ENCODE measurements at regions of chrX and their contacts with region 1.

Region 1: DNA sequence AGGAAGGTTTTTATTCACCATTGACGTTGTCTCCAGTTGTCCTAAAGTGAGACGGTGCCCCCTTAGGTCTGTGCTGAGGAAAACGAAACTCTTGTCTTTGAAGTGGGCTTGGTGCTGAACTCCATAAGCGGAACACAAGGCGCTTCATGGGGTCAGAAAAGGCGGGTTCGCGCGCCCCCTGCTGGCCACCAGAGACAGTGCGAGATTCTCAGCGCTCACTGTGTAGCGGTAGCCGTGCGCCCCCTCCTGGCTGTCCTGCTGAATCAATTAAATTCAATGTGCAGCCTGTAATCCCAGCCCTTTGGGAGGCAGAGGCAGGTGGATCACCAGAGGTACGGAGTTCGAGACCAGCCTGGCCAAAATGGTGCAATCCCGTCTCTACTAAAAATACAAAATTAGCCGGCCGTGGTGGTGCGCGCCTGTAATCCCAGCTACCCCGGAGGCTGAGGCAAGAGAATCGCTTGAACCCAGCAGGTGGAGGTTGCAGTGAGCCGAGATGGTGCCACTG is 64.1 kb downstream of the RLIM start:
- DNase-seq: peak; percentile 90
- ATAC-seq: peak; percentile 85
- H3K4me3 Mint-ChIP-seq: no peak overlapping the region
- H3K27ac Mint-ChIP-seq: peak overlapping the region; percentile 62
- H3K4me1 Mint-ChIP-seq: peaks cover 2% of the 10 kb centered on the region
- H3K27me3 Mint-ChIP-seq: peaks cover 2% of the 10 kb centered on the region

Region 2: DNA sequence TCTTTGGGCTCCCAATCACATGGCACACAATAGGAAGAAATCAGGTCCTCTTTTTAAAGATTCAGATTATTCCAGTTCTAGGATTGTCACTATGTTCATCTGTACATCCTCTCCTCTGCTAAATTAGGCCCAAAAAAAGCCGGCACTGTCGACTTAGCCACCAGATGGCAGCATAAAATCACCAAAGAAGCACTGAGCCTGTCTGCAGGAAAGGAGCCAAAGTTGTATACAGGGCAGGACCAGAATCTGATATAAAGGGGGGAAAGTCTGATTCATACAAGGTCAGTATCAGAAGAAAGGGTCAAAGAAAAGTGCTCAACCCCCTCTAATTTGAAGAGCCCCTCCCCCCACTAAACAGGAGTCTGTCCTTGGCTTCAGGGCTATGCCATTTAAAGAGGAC is 694.8 kb before region 1 on chrX:
- CTCF ChIA-PET with region 1: no interaction called
- POLR2A ChIA-PET with region 1: no interaction called
- intact Hi-C with region 1: loop called in 1 of 2 experiments (anchors 1 kb)
- DNase-seq: peak; percentile 67
- ATAC-seq: peak; percentile 61
- H3K4me3 Mint-ChIP-seq: no peak overlapping the region
- H3K27ac Mint-ChIP-seq: no peak overlapping the region
- H3K4me1 Mint-ChIP-seq: no peaks in the 10 kb centered on the region
- H3K27me3 Mint-ChIP-seq: no peaks in the 10 kb centered on the region

Region 3: GRCh38 chrX:74291964-74292807 is 258.2 kb before region 1 on chrX:
- CTCF ChIA-PET with region 1: interaction called, 5 read pairs
- POLR2A ChIA-PET with region 1: no interaction called
- intact Hi-C with region 1: loop called in 1 of 2 experiments (anchors 5 kb)
- DNase-seq: peak; percentile 90
- ATAC-seq: peak; percentile 89
- H3K4me3 Mint-ChIP-seq: peak overlapping the region; percentile 89
- H3K27ac Mint-ChIP-seq: peak overlapping the region; percentile 98
- H3K4me1 Mint-ChIP-seq: peaks cover 17% of the 10 kb centered on the region
- H3K27me3 Mint-ChIP-seq: no peaks in the 10 kb centered on the region

Region 4: DNA sequence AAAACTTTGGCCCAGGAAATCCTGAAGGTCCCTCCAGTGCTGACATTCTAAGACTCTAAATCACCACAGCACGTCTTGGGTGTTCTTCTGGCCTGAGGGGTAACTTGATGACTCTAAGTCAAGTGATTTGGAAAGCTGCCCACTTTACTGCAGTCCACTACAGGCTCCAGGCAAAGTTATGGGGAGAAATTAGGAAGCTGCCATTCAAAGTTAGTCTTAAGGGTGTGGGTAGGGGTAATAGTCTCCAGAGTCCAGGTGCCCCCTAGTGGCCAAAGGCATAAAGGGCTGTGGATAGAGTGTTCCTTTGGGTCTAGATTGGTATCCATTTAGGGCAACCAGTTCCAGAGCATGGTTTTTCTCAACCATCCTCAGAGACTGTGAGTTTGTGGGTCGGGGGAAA is 167.7 kb before region 1 on chrX:
- CTCF ChIA-PET with region 1: interaction called, 5 read pairs
- POLR2A ChIA-PET with region 1: no interaction called
- intact Hi-C with region 1: loop called (anchors 1 kb)
- DNase-seq: peak; percentile 76
- ATAC-seq: peak; percentile 80
- H3K4me3 Mint-ChIP-seq: no peak overlapping the region
- H3K27ac Mint-ChIP-seq: no peak overlapping the region
- H3K4me1 Mint-ChIP-seq: no peaks in the 10 kb centered on the region
- H3K27me3 Mint-ChIP-seq: peaks cover 2% of the 10 kb centered on the region

Region 5: GRCh38 chrX:74492720-74493201 is 57.6 kb before region 1 on chrX:
- CTCF ChIA-PET with region 1: interaction called, 4 read pairs
- POLR2A ChIA-PET with region 1: no interaction called
- intact Hi-C with region 1: loop called (anchors 1 kb)
- DNase-seq: peak; percentile 39
- ATAC-seq: peak; percentile 49
- H3K4me3 Mint-ChIP-seq: no peak overlapping the region
- H3K27ac Mint-ChIP-seq: no peak overlapping the region
- H3K4me1 Mint-ChIP-seq: no peaks in the 10 kb centered on the region
- H3K27me3 Mint-ChIP-seq: no peaks in the 10 kb centered on the region

Measured in activated CD4-positive, alpha-beta T cell treated with anti-CD3 and anti-CD28 coated beads for 36 hours (primary cell).